ENCODE measurements at regions of chr5 and their contacts with region 1.

Region 1: GRCh38 chr5:141618804-141619554 is at the start of gene DIAPH1:
- DNase-seq: peak; percentile 94 to 99 (median 98)
- ATAC-seq: peak; percentile 95
- H3K4me3 ChIP-seq: peak within 1 kb of the TSS; percentile 76 to 98
- H3K27ac ChIP-seq: peak within 1 kb of the TSS; percentile 91 to 99
- H3K4me1 ChIP-seq: peaks cover 0 to 59% of the 10 kb centered on the region in 2 donors
- H3K27me3 ChIP-seq: no peaks in the 10 kb centered on the region
- CTCF ChIP-seq: peak; percentile 93 to 98
- polyA plus RNA-seq, gene DIAPH1: 48.1 to 64.6 (median 57.0) TPM

Region 2: GRCh38 chr5:141598391-141599350 is 20.3 kb before region 1 on chr5:
- intact Hi-C with region 1: loop called in 1 of 2 experiments (anchors 2 kb)
- DNase-seq: no peak
- ATAC-seq: peak; percentile 34
- H3K4me3 ChIP-seq: no peak overlapping the region
- H3K27ac ChIP-seq: peak overlapping the region in 1 of 2 donors; percentile 45
- H3K4me1 ChIP-seq: peaks cover under 1 to 70% of the 10 kb centered on the region in 2 donors
- H3K27me3 ChIP-seq: no peaks in the 10 kb centered on the region
- CTCF ChIP-seq: no peak